CD4-positive, alpha-beta T cell (primary cell): ENCODE measurements at regions of chr7 and their contacts with region 1.

Region 1: DNA sequence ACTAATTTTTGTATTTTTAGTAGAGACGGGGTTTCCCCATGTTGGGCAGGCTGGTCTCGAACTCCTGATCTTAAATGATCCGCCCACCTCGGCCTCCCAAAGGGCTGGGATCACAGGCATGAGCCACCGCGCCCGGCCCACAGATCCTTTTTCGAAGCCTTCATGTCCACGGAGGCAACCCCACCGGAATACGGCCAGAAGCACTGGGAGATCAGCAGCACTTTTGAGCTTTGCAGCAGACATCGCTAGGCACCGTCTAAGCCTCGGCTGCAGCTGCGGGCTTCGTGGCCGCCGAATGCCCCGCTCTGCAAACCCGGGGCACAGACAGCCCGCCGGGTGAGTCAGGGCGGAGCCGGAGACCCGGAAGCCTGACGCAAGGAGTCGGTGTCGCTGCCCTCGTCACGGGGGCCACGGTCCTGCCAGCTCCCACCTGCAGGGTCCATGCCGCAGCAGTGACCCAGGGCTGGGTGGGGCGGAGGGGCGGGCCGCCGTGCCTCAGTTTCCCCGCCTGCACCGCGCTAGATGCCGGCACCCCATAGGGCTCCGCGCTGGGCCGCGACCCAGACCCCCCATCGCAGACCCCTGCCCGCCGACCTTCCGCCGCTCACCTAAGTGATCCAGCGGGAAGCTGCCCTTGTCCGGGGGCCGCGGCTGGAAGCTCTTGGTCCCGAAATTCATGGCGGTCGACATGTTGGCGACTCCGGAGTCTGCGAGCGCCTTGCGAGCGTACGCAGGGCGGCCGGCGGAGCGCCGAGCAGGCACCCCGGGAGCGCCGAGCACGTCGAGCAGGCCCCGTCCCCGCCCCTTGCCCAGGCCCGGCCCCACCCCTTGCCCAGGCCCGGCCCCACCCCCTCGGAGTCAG is at the start of gene COX19:
- DNase-seq: peak; percentile 85 to 95 (median 88)
- ATAC-seq: peak; percentile 89
- H3K4me3 ChIP-seq: peak within 1 kb of the TSS; percentile 87
- H3K4me3 Mint-ChIP-seq: peak within 1 kb of the TSS; percentile 91
- H3K27ac ChIP-seq: peak within 1 kb of the TSS; percentile 95 to 97
- H3K27ac Mint-ChIP-seq: peak within 1 kb of the TSS; percentile 94
- H3K4me1 ChIP-seq: peaks cover 26% of the 10 kb centered on the region
- H3K4me1 Mint-ChIP-seq: peaks cover 17% of the 10 kb centered on the region
- H3K27me3 ChIP-seq: no peaks in the 10 kb centered on the region
- H3K27me3 Mint-ChIP-seq: no peaks in the 10 kb centered on the region
- CTCF ChIP-seq: no peak
- total RNA-seq, gene COX19: 47.7 to 51.8 TPM

Region 2: GRCh38 chr7:909358-910329 is 65.4 kb before region 1 on chr7:
- CTCF ChIA-PET with region 1: interaction called, 10 read pairs
- POLR2A ChIA-PET with region 1: interaction called, 23 read pairs
- intact Hi-C with region 1: loop called (anchors 1 to 5 kb)
- DNase-seq: peak in 5 of 14 experiments; percentile 29 to 77 (median 52)
- ATAC-seq: peak; percentile 27
- H3K4me3 ChIP-seq: no peak overlapping the region
- H3K4me3 Mint-ChIP-seq: peak overlapping the region; percentile 81
- H3K27ac ChIP-seq: no peak overlapping the region
- H3K27ac Mint-ChIP-seq: peak overlapping the region; percentile 76
- H3K4me1 ChIP-seq: peaks cover 30% of the 10 kb centered on the region
- H3K4me1 Mint-ChIP-seq: peaks cover 11% of the 10 kb centered on the region
- H3K27me3 ChIP-seq: no peaks in the 10 kb centered on the region
- H3K27me3 Mint-ChIP-seq: no peaks in the 10 kb centered on the region
- CTCF ChIP-seq: peak; percentile 40

Region 3: GRCh38 chr7:923108-924041 is 51.7 kb before region 1 on chr7:
- CTCF ChIA-PET with region 1: interaction called, 3 read pairs
- POLR2A ChIA-PET with region 1: interaction called, 79 read pairs
- intact Hi-C with region 1: loop called (anchors 1 kb)
- DNase-seq: peak; percentile 80 to 97 (median 91)
- ATAC-seq: peak; percentile 92
- H3K4me3 ChIP-seq: peak overlapping the region; percentile 77
- H3K4me3 Mint-ChIP-seq: peak overlapping the region; percentile 90
- H3K27ac ChIP-seq: peak overlapping the region; percentile 89 to 91
- H3K27ac Mint-ChIP-seq: peak overlapping the region; percentile 92
- H3K4me1 ChIP-seq: peaks cover 60% of the 10 kb centered on the region
- H3K4me1 Mint-ChIP-seq: peaks cover 30% of the 10 kb centered on the region
- H3K27me3 ChIP-seq: no peaks in the 10 kb centered on the region
- H3K27me3 Mint-ChIP-seq: no peaks in the 10 kb centered on the region
- CTCF ChIP-seq: no peak

Region 4: DNA sequence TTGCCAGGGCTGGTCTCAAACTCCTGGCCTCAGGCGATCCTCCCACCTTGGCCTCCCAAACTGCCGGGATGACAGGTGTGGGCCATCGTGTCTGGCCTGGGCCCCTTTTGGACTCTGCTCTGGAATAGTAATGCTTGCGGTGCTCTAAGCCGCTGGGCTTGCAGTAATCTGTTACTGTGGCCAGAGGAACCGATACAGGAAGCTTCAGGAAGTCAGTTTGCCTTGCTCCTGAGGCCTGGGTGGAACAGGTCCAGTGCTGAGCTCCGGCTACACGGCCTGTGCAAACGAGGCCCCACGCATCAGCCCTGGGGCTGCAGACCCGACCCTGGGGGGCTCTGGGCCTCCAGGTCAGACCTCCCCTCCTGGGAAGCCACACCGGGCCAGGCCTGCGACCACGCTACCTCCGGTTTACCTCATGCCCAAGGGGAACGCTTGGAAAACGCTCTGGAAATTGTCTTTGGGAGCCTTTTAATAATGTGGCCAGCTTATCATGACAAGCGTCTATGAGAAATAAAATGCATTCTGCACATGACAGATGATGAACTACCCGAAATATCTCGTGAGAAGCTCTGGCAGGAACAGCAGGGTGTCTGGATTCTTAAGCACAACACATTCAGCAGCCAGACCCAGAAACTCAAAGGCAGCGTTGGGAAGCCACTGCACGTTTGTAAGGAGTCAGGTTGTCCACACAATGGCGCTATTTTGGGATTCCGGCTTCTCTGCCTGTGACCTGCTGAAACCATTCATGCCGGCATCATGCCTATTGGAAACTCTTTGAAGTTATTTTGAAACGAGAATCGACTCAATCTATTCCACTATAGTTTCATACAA is 10.4 kb before region 1 on chr7:
- CTCF ChIA-PET with region 1: interaction called, 8 read pairs
- POLR2A ChIA-PET with region 1: interaction called, 16 read pairs
- intact Hi-C with region 1: no loop called
- DNase-seq: peak in 3 of 14 experiments; percentile 2 to 45 (median 39)
- ATAC-seq: no peak
- H3K4me3 ChIP-seq: no peak overlapping the region
- H3K4me3 Mint-ChIP-seq: no peak overlapping the region
- H3K27ac ChIP-seq: no peak overlapping the region
- H3K27ac Mint-ChIP-seq: peak overlapping the region; percentile 27
- H3K4me1 ChIP-seq: peaks cover 35% of the 10 kb centered on the region
- H3K4me1 Mint-ChIP-seq: peaks cover 34% of the 10 kb centered on the region
- H3K27me3 ChIP-seq: peaks cover 0 to 3% of the 10 kb centered on the region in 2 experiments
- H3K27me3 Mint-ChIP-seq: peaks cover 16% of the 10 kb centered on the region
- CTCF ChIP-seq: no peak

Region 5: DNA sequence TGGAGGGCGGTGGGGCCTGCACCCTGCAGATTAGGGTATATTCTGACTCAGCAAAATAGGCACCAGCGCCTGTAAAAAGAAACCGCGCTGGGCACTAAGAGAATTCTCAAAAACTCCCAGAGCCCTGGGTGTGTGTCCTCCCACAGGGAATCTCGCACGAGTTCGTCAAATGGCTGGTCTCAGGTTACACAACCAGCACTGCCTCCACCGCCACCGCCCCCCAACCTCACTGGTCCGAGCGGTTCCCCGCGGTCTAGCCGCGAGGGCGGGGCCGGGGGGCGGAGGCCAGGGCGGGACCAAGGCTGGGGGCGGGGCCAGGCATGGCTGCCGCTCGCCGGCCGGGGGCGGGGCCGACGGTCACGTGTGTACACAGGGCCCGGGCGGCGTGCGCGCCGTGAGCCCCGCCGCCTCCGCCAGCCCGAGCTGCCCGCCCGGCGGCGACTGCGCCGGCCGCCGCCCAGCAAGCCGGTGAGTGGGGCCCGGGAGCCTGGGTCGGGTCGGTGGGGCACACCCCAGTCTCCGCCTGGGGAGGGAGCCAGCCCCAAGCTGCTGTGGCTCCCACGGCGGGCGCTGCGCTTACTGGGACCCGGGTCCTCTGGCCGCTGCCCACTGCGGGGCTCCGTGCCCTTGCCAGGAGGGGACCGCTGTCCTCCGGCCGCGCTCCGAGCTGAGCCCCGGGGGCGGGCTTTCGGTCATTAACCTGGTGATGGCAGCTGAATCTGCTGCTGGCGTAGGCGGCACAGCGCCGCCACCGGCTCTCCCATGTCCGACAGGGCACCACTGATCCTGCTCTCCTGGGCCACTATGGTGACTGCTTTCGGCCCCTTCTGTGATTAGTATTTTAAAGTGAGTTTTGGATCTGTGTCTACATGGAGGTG is 69.4 kb after region 1 on chr7 and contains the start of gene GPR146:
- CTCF ChIA-PET with region 1: interaction called, 9 read pairs
- POLR2A ChIA-PET with region 1: interaction called, 10 read pairs
- intact Hi-C with region 1: loop called in 1 of 2 experiments (anchors 5 kb)
- DNase-seq: peak; percentile 82 to 95 (median 90)
- ATAC-seq: peak; percentile 80
- H3K4me3 ChIP-seq: peak within 1 kb of the TSS; percentile 50
- H3K4me3 Mint-ChIP-seq: peak within 1 kb of the TSS; percentile 91
- H3K27ac ChIP-seq: peak within 1 kb of the TSS in 1 of 2 donors; percentile 56
- H3K27ac Mint-ChIP-seq: peak within 1 kb of the TSS; percentile 79
- H3K4me1 ChIP-seq: peaks cover 67% of the 10 kb centered on the region
- H3K4me1 Mint-ChIP-seq: peaks cover 60% of the 10 kb centered on the region
- H3K27me3 ChIP-seq: no peaks in the 10 kb centered on the region
- H3K27me3 Mint-ChIP-seq: no peaks in the 10 kb centered on the region
- CTCF ChIP-seq: peak; percentile 66
- total RNA-seq, gene GPR146: 9.9 to 13.7 TPM

Region 6: DNA sequence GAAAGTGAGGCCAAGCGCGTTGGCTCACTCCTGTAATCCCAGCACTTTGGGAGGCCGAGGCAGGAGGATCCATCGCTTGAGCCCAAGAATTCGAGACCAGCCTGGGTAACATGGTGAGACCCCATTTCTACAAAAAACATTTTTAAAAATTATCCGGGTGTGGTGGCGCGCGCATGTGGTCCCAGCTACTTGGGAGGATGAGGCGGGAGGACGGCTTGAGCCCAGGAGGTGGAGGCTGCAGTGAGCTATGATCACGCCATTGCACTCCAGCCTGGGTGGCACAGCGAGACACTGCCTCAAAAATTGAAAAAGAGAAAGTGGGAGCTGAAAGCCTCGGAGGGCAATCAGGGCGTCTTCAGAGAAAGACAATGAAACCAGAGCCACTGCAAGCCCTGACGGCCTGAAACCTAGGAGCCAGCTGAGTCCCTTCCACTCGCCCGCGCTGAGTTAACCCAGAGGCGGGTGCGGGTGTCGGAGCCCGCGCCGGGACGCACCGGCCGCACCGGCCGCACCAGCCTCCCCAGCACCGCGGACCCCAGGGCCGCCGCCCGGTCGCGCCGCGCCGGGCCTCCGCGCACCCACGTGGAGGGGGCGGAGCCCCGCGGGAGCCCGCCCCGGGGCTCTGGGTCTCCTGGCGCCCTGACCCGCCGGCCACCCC is 162.6 kb after region 1 on chr7:
- CTCF ChIA-PET with region 1: no interaction called
- POLR2A ChIA-PET with region 1: interaction called, 7 read pairs
- intact Hi-C with region 1: loop called in 1 of 2 experiments (anchors 5 kb)
- DNase-seq: no peak
- ATAC-seq: peak; percentile 46
- H3K4me3 ChIP-seq: peak overlapping the region; percentile 62
- H3K4me3 Mint-ChIP-seq: peak overlapping the region; percentile 95
- H3K27ac ChIP-seq: peak overlapping the region; percentile 50 to 65
- H3K27ac Mint-ChIP-seq: peak overlapping the region; percentile 71
- H3K4me1 ChIP-seq: peaks cover 20% of the 10 kb centered on the region
- H3K4me1 Mint-ChIP-seq: peaks cover 19% of the 10 kb centered on the region
- H3K27me3 ChIP-seq: no peaks in the 10 kb centered on the region
- H3K27me3 Mint-ChIP-seq: no peaks in the 10 kb centered on the region
- CTCF ChIP-seq: no peak

Region 7: DNA sequence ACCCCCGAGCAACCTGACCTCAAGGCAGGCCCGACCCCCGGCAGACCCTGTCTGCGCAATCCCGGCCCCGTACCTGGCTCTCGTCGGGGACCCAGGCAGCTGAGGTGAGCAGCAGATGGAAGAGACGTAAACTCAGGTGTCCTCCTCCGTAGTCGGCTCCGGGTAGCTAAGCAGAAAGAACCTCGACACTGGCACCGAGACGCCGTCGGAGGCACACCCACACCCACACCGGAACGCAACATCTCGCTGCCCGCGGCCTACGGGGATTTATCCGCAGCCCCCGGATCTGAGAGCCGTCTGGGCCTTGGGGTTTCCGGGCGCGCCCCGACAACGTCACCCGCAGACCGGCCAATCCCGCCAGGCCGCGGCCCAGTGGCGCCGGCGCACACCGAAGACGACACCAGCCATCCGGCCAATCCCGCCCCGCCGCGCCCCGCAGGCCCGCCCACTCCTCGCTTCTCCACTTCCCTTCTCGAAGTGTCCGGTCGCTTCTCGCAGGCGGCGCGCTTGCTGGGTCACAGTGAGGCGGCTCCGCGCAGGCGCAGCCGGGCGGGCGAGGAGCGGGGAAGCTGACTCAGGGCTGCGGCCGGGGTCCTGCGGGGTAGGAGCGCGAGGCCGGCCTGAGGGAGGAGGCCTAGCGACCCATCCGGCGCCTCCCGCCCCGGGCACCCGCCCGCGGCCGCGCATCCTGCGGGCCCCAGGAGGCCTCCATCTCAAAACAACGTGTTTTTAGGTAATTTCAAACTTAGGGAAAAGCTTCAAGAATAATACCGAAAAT is 185.0 kb after region 1 on chr7 and contains the start of gene ZFAND2A:
- CTCF ChIA-PET with region 1: no interaction called
- POLR2A ChIA-PET with region 1: interaction called, 9 read pairs
- intact Hi-C with region 1: loop called in 1 of 2 experiments (anchors 2 kb)
- DNase-seq: peak; percentile 96 to 99 (median 98)
- ATAC-seq: peak; percentile 97
- H3K4me3 ChIP-seq: peak within 1 kb of the TSS; percentile 95
- H3K4me3 Mint-ChIP-seq: peak within 1 kb of the TSS; percentile 92
- H3K27ac ChIP-seq: peak within 1 kb of the TSS; percentile 88 to 94
- H3K27ac Mint-ChIP-seq: peak within 1 kb of the TSS; percentile 87
- H3K4me1 ChIP-seq: peaks cover 17% of the 10 kb centered on the region
- H3K4me1 Mint-ChIP-seq: peaks cover 29% of the 10 kb centered on the region
- H3K27me3 ChIP-seq: no peaks in the 10 kb centered on the region
- H3K27me3 Mint-ChIP-seq: no peaks in the 10 kb centered on the region
- CTCF ChIP-seq: no peak
- total RNA-seq, gene ZFAND2A: 92.3 to 92.5 TPM